ENCODE measurements at regions of chr16 and their contacts with region 1.

Region 1: GRCh38 chr16:66977341-66978113 is 10.9 kb upstream of the CES4A start:
- DNase-seq: peak; percentile 89 to 93 (median 90)
- ATAC-seq: peak; percentile 91
- H3K4me3 ChIP-seq: no peak overlapping the region
- H3K27ac ChIP-seq: no peak overlapping the region
- H3K4me1 ChIP-seq: no peaks in the 10 kb centered on the region
- H3K27me3 ChIP-seq: no peaks in the 10 kb centered on the region
- CTCF ChIP-seq: peak; percentile 89 to 99 (median 96)
- POLR2A ChIP-seq: no peak

Region 2: DNA sequence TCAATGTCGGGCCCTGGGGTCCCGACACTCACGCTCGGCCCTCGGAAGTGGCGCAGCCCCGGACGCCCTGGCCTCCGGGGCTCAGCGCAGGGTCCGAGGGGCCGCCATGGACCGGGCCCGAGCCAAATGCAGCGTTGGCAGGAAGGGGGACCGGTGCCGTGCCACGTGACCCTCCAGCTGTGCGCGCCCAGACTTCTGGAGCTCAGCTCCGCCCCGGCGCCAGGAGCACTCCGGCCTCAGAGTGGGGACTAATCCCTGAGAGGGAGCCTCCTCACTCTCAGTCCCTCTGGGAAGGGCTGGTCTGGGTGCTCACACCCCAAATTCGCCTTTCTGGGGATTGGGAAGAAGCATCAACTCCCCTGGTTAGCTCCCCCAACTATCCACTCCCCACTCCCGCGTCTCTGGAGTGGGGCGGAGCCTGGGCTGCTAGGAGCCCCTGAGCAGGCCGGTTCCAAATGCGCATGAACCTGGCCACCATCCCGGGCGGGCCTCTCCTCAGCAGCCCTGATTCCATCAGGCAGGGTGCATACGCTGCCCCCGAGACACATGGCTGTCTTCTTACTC is 173.4 kb after region 1 on chr16 and contains the start of gene B3GNT9:
- intact Hi-C with region 1: loop called (anchors 5 kb)
- DNase-seq: peak in 3 of 4 donors; percentile 45 to 72 (median 70)
- ATAC-seq: peak; percentile 54
- H3K4me3 ChIP-seq: peak within 1 kb of the TSS; percentile 14 to 31
- H3K27ac ChIP-seq: peak within 1 kb of the TSS; percentile 17 to 61 (median 38)
- H3K4me1 ChIP-seq: peaks cover 30% of the 10 kb centered on the region
- H3K27me3 ChIP-seq: no peaks in the 10 kb centered on the region
- CTCF ChIP-seq: no peak
- POLR2A ChIP-seq: peak in 1 of 3 donors; percentile 12
- total RNA-seq, gene B3GNT9: 8.3 to 9.9 TPM

Region 3: GRCh38 chr16:67183627-67184328 is 206.3 kb after region 1 on chr16 and contains the start of gene MATCAP1:
- intact Hi-C with region 1: loop called (anchors 10 kb)
- DNase-seq: peak; percentile 92 to 98 (median 96)
- ATAC-seq: peak; percentile 93
- H3K4me3 ChIP-seq: peak within 1 kb of the TSS; percentile 49 to 68
- H3K27ac ChIP-seq: peak within 1 kb of the TSS; percentile 92 to 96 (median 96)
- H3K4me1 ChIP-seq: peaks cover 31% of the 10 kb centered on the region
- H3K27me3 ChIP-seq: no peaks in the 10 kb centered on the region
- CTCF ChIP-seq: peak in 1 of 7 experiments; percentile 13
- POLR2A ChIP-seq: peak; percentile 44 to 71 (median 71)
- total RNA-seq, gene MATCAP1: 11.9 to 31.6 TPM